Posterior vena cava (tissue), 2 donors: ENCODE measurements at regions of chr10 and their contacts with region 1.

Region 1: GRCh38 chr10:87817609-87818504 is at the start of gene ATAD1:
- DNase-seq: peak; percentile 93
- total RNA-seq, gene ATAD1: 45.3 to 47.3 TPM

Region 2: GRCh38 chr10:87804939-87805569 is 12.8 kb before region 1 on chr10:
- intact Hi-C with region 1: loop called in 1 of 2 experiments (anchors 1 kb)
- DNase-seq: no peak